HAP-1 (cell line): ENCODE measurements at regions of chr2 and their contacts with region 1.

Region 1: DNA sequence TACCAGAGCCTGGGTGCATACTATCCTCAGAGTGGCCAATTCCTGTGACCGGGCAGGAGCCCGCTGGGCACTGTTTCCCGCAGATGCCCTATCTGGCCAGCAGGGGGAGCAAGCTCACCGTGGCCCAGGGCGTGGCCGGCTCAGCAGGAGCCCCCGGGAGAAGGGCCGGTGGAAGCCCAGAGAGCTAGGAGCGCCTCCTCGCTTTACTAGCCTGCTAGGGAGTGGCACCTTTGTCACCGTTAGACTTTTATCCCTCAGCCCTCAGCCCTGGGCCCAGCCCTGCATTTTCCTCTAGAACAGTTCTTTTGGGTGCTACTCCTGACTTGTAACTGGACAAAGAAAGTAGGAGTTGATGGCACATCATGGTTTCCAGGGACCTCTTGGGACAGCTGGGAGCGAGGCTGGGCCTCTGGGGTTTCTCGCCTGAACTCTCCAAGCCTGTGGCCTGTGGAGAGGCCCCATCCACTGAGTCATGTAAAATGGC is 24.0 kb downstream of the TMEM177 start:
- DNase-seq: peak; percentile 74 to 85
- H3K4me3 ChIP-seq: no peak overlapping the region
- H3K4me1 ChIP-seq: no peaks in the 10 kb centered on the region
- H3K27me3 ChIP-seq: no peaks in the 10 kb centered on the region

Region 2: DNA sequence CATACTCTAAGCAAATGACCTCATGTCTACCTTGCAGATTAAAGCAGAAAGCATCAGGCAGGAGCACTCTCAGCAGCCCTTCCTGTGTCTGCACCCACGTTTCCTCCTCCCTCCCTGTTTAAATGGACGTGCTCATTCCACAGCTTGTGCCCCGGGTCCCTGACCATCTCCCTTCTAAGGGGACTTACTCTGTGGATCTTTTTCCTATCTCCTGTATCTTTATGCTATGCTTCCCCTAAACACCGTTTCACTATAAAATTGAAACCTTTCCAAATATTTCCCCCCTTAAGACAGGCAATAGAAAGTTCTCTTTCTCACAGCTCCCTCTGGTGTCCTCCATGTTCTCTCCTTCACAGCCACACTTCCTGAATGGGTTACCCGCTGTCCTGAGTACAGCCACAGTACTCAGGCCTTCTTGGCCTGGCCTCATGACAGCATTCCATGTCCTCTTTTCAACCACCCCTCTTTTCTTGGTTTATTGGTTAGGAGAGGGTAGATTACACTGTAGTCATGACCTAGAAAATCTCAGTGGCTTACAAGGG is 479.1 kb after region 1 on chr2:
- in situ Hi-C with region 1: loop called (anchors 5 kb)
- DNase-seq: no peak
- H3K4me3 ChIP-seq: no peak overlapping the region
- H3K4me1 ChIP-seq: no peaks in the 10 kb centered on the region
- H3K27me3 ChIP-seq: no peaks in the 10 kb centered on the region